PC-9 (cell line): ENCODE measurements at regions of chr7 and their contacts with region 1.

Region 1: GRCh38 chr7:73792594-73793292 is 22.7 kb upstream of the CLDN3 start:
- DNase-seq: peak; percentile 70 to 93
- H3K4me3 ChIP-seq: no peak overlapping the region
- H3K27ac ChIP-seq: peak overlapping the region; percentile 80
- H3K4me1 ChIP-seq: peaks cover 29% of the 10 kb centered on the region
- H3K27me3 ChIP-seq: no peaks in the 10 kb centered on the region
- CTCF ChIP-seq: no peak

Region 2: GRCh38 chr7:73746003-73746777 is 46.6 kb before region 1 on chr7:
- CTCF ChIA-PET with region 1: no interaction called
- POLR2A ChIA-PET with region 1: interaction called, 7 read pairs
- intact Hi-C with region 1: loop called (anchors 1 kb)
- DNase-seq: peak; percentile 82 to 91
- H3K4me3 ChIP-seq: no peak overlapping the region
- H3K27ac ChIP-seq: peak overlapping the region; percentile 84
- H3K4me1 ChIP-seq: peaks cover 65% of the 10 kb centered on the region
- H3K27me3 ChIP-seq: no peaks in the 10 kb centered on the region
- CTCF ChIP-seq: no peak

Region 3: DNA sequence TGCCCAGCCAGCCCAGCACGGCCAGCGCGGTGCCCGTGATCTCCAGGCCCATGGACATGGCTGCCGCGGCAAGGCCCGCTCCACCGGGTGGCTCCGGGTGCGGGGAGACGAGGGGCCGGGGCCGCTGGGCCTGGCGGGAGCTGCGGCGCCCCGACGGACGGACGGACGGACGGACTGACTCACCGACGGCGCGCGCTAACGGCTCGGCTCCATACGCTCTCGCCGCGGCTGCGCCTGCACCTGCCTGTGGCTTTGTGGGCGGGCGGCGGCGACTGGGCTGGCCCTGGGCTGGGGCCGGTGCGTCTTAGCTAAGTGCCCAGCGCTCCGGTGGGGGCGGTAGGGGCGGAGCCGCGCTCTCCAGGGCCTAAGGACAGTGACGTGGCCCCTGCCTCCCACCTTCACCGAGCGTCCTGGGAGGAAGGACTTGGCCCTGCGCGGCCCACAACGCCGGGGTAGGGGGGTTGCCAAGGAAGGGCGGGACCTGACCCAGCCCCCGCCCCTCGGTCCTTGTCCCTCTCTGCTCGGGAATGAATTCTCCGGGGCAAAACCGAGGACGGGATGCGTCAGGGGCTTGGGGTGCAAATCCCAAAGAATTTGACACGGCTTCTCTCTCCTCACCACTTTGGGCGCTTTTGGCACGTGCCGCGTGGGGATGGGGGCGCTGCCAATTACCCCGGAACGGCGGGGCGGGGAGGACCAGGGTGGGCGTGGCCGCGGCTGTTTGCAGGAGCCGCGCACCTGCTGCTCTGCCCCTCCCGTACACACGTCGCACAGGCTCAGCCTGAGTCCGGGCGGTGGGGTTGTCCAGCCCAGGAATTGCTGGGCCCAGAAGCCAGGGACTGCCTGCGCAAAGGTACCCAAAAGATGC is 22.5 kb before region 1 on chr7 and contains the start of gene CLDN3:
- CTCF ChIA-PET with region 1: no interaction called
- POLR2A ChIA-PET with region 1: interaction called, 7 read pairs
- intact Hi-C with region 1: loop called (anchors 2 kb)
- DNase-seq: peak; percentile 83 to 97
- H3K4me3 ChIP-seq: peak within 1 kb of the TSS; percentile 66; the same call in 1 of the 2 replicates
- H3K27ac ChIP-seq: peak within 1 kb of the TSS; percentile 58
- H3K4me1 ChIP-seq: peaks cover 23% of the 10 kb centered on the region
- H3K27me3 ChIP-seq: no peaks in the 10 kb centered on the region
- CTCF ChIP-seq: no peak
- total RNA-seq, gene CLDN3: 31.3 and 45.2 TPM in 2 replicates

Region 4: GRCh38 chr7:73811760-73812168 is 19.0 kb after region 1 on chr7:
- CTCF ChIA-PET with region 1: no interaction called
- POLR2A ChIA-PET with region 1: no interaction called
- intact Hi-C with region 1: loop called (anchors 1 kb)
- DNase-seq: peak; percentile 55 to 75
- H3K4me3 ChIP-seq: no peak overlapping the region
- H3K27ac ChIP-seq: no peak overlapping the region
- H3K4me1 ChIP-seq: peaks cover 22% of the 10 kb centered on the region
- H3K27me3 ChIP-seq: no peaks in the 10 kb centered on the region
- CTCF ChIP-seq: peak; percentile 89

Region 5: DNA sequence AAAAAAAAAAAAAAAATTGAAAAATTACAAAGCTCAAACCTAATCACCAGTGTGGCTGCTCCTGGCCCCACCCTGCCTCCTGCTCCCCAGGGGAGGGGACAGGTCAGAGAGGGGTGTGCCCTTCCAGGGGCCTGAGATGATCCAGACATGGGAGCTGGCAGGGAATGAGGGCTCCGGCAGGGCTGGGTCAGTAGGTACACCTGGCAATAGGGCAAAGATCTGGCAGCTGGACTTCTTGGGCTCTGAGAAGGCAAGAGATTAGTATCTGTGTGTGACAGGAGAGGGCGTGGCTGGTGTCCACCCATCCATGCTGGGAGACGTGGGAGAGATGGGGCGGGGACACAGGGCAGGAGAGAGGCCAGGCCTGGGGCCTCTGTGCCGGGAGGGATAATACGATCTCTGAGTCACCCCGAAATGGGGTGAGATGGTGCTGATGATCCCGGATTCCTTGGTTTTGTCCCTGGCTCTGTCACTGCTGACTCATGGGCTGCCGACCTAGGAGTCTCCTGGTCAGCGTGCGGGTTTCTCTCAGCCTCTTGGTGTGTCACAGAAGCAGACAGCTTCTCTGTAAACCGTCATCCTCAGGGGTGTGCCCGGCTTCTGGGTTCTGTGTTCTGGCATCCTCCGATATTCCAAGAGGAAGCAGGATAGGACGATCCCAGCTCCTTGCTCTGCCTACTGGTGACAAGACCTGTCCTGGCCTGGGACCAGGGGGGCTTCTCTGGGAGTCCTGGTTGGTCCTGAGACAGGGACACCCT is 29.8 kb after region 1 on chr7:
- CTCF ChIA-PET with region 1: interaction called, 4 read pairs
- POLR2A ChIA-PET with region 1: interaction called, 17 read pairs
- intact Hi-C with region 1: no loop called
- DNase-seq: peak; percentile 99
- H3K4me3 ChIP-seq: no peak overlapping the region
- H3K27ac ChIP-seq: peak overlapping the region; percentile 99
- H3K4me1 ChIP-seq: peaks cover 62% of the 10 kb centered on the region
- H3K27me3 ChIP-seq: no peaks in the 10 kb centered on the region
- CTCF ChIP-seq: no peak

Region 6: GRCh38 chr7:73842247-73842895 is 49.6 kb after region 1 on chr7 and contains the start of gene METTL27:
- CTCF ChIA-PET with region 1: no interaction called
- POLR2A ChIA-PET with region 1: interaction called, 10 read pairs
- intact Hi-C with region 1: no loop called
- DNase-seq: peak; percentile 79 to 97
- H3K4me3 ChIP-seq: peak within 1 kb of the TSS; percentile 84
- H3K27ac ChIP-seq: peak within 1 kb of the TSS; percentile 59
- H3K4me1 ChIP-seq: peaks cover 20% of the 10 kb centered on the region
- H3K27me3 ChIP-seq: no peaks in the 10 kb centered on the region
- CTCF ChIP-seq: no peak
- total RNA-seq, gene METTL27: 23.2 and 34.7 TPM in 2 replicates